Tibial artery (tissue), 4 donors: ENCODE measurements at regions of chr16 and their contacts with region 1.

Region 1: GRCh38 chr16:25051406-25052150 is 36.4 kb upstream of the ARHGAP17 start:
- DNase-seq: no peak
- H3K4me3 ChIP-seq: peak overlapping the region; percentile 11 to 20
- H3K27ac ChIP-seq: peak overlapping the region; percentile 59 to 60
- H3K4me1 ChIP-seq: peaks cover 0 to 46% (median 10%) of the 10 kb centered on the region in 4 donors
- H3K27me3 ChIP-seq: no peaks in the 10 kb centered on the region
- CTCF ChIP-seq: no peak

Region 2: DNA sequence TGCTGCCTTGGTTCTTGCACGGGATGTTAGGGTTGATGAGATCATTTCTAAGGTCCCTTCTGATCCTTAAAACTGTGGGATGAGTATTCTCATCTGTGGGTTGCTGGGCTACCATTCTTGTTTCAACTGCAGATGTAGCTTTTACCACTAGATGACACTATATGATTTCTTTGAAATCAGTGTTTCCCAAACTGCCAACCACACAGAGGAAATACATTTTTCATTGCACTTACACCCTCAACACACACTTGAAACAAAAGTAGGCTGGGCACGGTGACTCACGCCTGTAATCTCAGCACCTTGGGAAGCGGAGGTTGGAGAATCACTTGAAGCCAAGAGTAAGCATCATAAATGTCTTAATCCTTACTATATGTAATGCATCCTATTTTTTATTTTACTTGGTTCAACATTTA is 75.2 kb after region 1 on chr16:
- intact Hi-C with region 1: loop called (anchors 5 kb)
- DNase-seq: no peak
- H3K4me3 ChIP-seq: no peak overlapping the region
- H3K27ac ChIP-seq: no peak overlapping the region
- H3K4me1 ChIP-seq: no peaks in the 10 kb centered on the region
- H3K27me3 ChIP-seq: no peaks in the 10 kb centered on the region
- CTCF ChIP-seq: peak in 1 of 2 experiments; percentile 32

Region 3: GRCh38 chr16:25224731-25225319 is 173.2 kb after region 1 on chr16:
- intact Hi-C with region 1: loop called (anchors 10 kb)
- DNase-seq: no peak
- H3K4me3 ChIP-seq: no peak overlapping the region
- H3K27ac ChIP-seq: peak overlapping the region in 1 of 2 donors; percentile 10
- H3K4me1 ChIP-seq: peaks cover 0 to 8% (median 4%) of the 10 kb centered on the region in 4 donors
- H3K27me3 ChIP-seq: no peaks in the 10 kb centered on the region
- CTCF ChIP-seq: no peak

Region 4: DNA sequence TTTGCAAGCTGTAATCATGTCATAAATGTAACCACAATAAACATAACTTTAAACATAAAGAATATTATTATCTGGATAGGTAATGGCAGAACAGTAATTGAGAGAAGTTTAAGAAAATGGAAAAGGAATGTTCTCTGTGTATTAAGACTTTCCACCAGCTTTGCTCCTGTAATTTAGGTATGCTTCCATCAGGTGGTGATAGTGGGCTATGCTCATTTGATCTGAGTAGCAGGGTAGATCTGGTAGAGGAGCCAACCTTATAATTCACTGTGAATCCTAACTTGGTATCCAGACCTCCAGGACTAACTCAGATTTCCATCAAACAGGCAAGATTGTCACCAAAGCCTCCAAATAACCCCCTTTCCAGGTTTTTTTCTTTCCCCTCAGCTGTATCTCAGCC is 343.9 kb after region 1 on chr16:
- intact Hi-C with region 1: no loop called
- DNase-seq: no peak
- H3K4me3 ChIP-seq: no peak overlapping the region
- H3K27ac ChIP-seq: no peak overlapping the region
- H3K4me1 ChIP-seq: no peaks in the 10 kb centered on the region
- H3K27me3 ChIP-seq: no peaks in the 10 kb centered on the region
- CTCF ChIP-seq: no peak